Naive thymus-derived CD4-positive, alpha-beta T cell (primary cell): ENCODE measurements at regions of chr6 and their contacts with region 1.

Region 1: GRCh38 chr6:13427801-13428582 is 59.4 kb downstream of the GFOD1 start:
- DNase-seq: peak; percentile 29 to 76 (median 52)
- ATAC-seq: peak; percentile 86
- H3K4me3 ChIP-seq: peak overlapping the region; percentile 40
- H3K4me3 Mint-ChIP-seq: peak overlapping the region; percentile 62 to 92 (median 80)
- H3K27ac ChIP-seq: peak overlapping the region; percentile 9
- H3K27ac Mint-ChIP-seq: peak overlapping the region; percentile 1 to 85 (median 79)
- H3K4me1 ChIP-seq: peaks cover 26 to 55% of the 10 kb centered on the region in 2 donors
- H3K4me1 Mint-ChIP-seq: peaks cover 21 to 78% (median 49%) of the 10 kb centered on the region in 7 donors
- H3K27me3 ChIP-seq: no peaks in the 10 kb centered on the region
- H3K27me3 Mint-ChIP-seq: peaks cover 0 to 2% (median 0%) of the 10 kb centered on the region in 5 donors

Region 2: GRCh38 chr6:13194852-13195251 is 233.1 kb before region 1 on chr6:
- CTCF ChIA-PET with region 1: no interaction called
- POLR2A ChIA-PET with region 1: no interaction called
- intact Hi-C with region 1: no loop called
- DNase-seq: no peak
- ATAC-seq: peak; percentile 41
- H3K4me3 ChIP-seq: no peak overlapping the region
- H3K4me3 Mint-ChIP-seq: no peak overlapping the region
- H3K27ac ChIP-seq: no peak overlapping the region
- H3K27ac Mint-ChIP-seq: no peak overlapping the region
- H3K4me1 ChIP-seq: no peaks in the 10 kb centered on the region
- H3K4me1 Mint-ChIP-seq: no peaks in the 10 kb centered on the region
- H3K27me3 ChIP-seq: no peaks in the 10 kb centered on the region
- H3K27me3 Mint-ChIP-seq: peaks cover 0 to 21% (median 15%) of the 10 kb centered on the region in 5 donors

Region 3: GRCh38 chr6:13355043-13355951 is 72.7 kb before region 1 on chr6:
- CTCF ChIA-PET with region 1: no interaction called
- POLR2A ChIA-PET with region 1: no interaction called
- intact Hi-C with region 1: loop called in 1 of 2 experiments (anchors 1 kb)
- DNase-seq: peak in 8 of 9 donors; percentile 10 to 42 (median 30)
- ATAC-seq: peak; percentile 75
- H3K4me3 ChIP-seq: peak overlapping the region; percentile 22
- H3K4me3 Mint-ChIP-seq: peak overlapping the region; percentile 78 to 91 (median 80)
- H3K27ac ChIP-seq: peak overlapping the region; percentile 46
- H3K27ac Mint-ChIP-seq: peak overlapping the region; percentile 71 to 98 (median 85)
- H3K4me1 ChIP-seq: peaks cover 27 to 32% of the 10 kb centered on the region in 2 donors
- H3K4me1 Mint-ChIP-seq: peaks cover 33 to 56% (median 46%) of the 10 kb centered on the region in 7 donors
- H3K27me3 ChIP-seq: no peaks in the 10 kb centered on the region
- H3K27me3 Mint-ChIP-seq: no peaks in the 10 kb centered on the region

Region 4: GRCh38 chr6:13383328-13384163 is 44.4 kb before region 1 on chr6:
- CTCF ChIA-PET with region 1: no interaction called
- POLR2A ChIA-PET with region 1: no interaction called
- intact Hi-C with region 1: loop called in 1 of 2 experiments (anchors 5 kb)
- DNase-seq: no peak
- ATAC-seq: peak; percentile 93
- H3K4me3 ChIP-seq: no peak overlapping the region
- H3K4me3 Mint-ChIP-seq: peak overlapping the region in 1 of 10 donors; percentile 23
- H3K27ac ChIP-seq: no peak overlapping the region
- H3K27ac Mint-ChIP-seq: peak overlapping the region in 2 of 9 donors; percentile 31 to 58
- H3K4me1 ChIP-seq: peaks cover 0 to 8% of the 10 kb centered on the region in 2 donors
- H3K4me1 Mint-ChIP-seq: peaks cover 0 to 30% (median 0%) of the 10 kb centered on the region in 7 donors
- H3K27me3 ChIP-seq: no peaks in the 10 kb centered on the region
- H3K27me3 Mint-ChIP-seq: no peaks in the 10 kb centered on the region

Region 5: GRCh38 chr6:13445005-13445743 is 17.2 kb after region 1 on chr6:
- CTCF ChIA-PET with region 1: interaction called, 3 read pairs
- POLR2A ChIA-PET with region 1: no interaction called
- intact Hi-C with region 1: loop called in 1 of 2 experiments (anchors 2 kb)
- DNase-seq: peak in 6 of 9 donors; percentile 30 to 55 (median 43)
- ATAC-seq: peak; percentile 45
- H3K4me3 ChIP-seq: no peak overlapping the region
- H3K4me3 Mint-ChIP-seq: peak overlapping the region in 5 of 10 donors; percentile 4 to 62 (median 10)
- H3K27ac ChIP-seq: no peak overlapping the region
- H3K27ac Mint-ChIP-seq: peak overlapping the region in 3 of 9 donors; percentile 2 to 20 (median 3)
- H3K4me1 ChIP-seq: peaks cover 0 to 10% of the 10 kb centered on the region in 2 donors
- H3K4me1 Mint-ChIP-seq: peaks cover 10 to 28% (median 17%) of the 10 kb centered on the region in 7 donors
- H3K27me3 ChIP-seq: no peaks in the 10 kb centered on the region
- H3K27me3 Mint-ChIP-seq: no peaks in the 10 kb centered on the region

Region 6: GRCh38 chr6:13522656-13523055 is 94.7 kb after region 1 on chr6:
- CTCF ChIA-PET with region 1: no interaction called
- POLR2A ChIA-PET with region 1: no interaction called
- intact Hi-C with region 1: no loop called
- DNase-seq: no peak
- ATAC-seq: peak; percentile 30
- H3K4me3 ChIP-seq: no peak overlapping the region
- H3K4me3 Mint-ChIP-seq: no peak overlapping the region
- H3K27ac ChIP-seq: no peak overlapping the region
- H3K27ac Mint-ChIP-seq: no peak overlapping the region
- H3K4me1 ChIP-seq: peaks cover 0 to 13% of the 10 kb centered on the region in 2 donors
- H3K4me1 Mint-ChIP-seq: peaks cover 9 to 22% (median 12%) of the 10 kb centered on the region in 7 donors
- H3K27me3 ChIP-seq: no peaks in the 10 kb centered on the region
- H3K27me3 Mint-ChIP-seq: peaks cover 0 to 15% (median 0%) of the 10 kb centered on the region in 5 donors